ENCODE measurements at regions of chr19 and their contacts with region 1.

Region 1: DNA sequence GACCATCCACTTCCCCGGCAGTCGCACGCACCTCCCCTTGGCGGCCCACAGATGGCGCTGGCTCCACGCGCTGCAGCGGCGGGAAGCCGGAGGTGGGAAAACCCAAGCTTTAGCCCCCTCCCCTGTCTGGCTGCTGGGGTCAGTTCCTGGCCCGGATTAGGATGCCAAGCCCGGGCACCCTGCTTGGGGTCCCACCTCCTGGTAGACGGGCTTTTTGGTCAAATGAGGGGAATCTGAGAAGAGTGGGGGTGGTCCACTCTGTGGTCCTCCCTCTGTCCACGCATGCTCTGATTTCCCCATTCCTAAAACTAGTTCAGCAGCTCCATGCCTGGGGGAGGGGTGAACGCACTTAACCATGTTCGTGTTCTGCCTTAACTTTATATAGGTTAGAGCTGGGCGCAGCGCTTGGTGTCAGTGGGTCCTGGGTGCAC is 8.1 kb upstream of the ADGRE2 start:
- DNase-seq: no peak
- ATAC-seq: no peak
- H3K4me3 Mint-ChIP-seq: peak overlapping the region; percentile 41
- H3K27ac Mint-ChIP-seq: peak overlapping the region; percentile 63
- H3K4me1 Mint-ChIP-seq: peaks cover 41% of the 10 kb centered on the region
- H3K27me3 Mint-ChIP-seq: no peaks in the 10 kb centered on the region
- CTCF ChIP-seq: no peak

Region 2: GRCh38 chr19:14577885-14578427 is 208.5 kb before region 1 on chr19:
- CTCF ChIA-PET with region 1: interaction called, 5 read pairs
- POLR2A ChIA-PET with region 1: interaction called, 3 read pairs
- intact Hi-C with region 1: loop called (anchors 2 kb)
- DNase-seq: peak; percentile 52
- ATAC-seq: peak; percentile 59
- H3K4me3 Mint-ChIP-seq: peak overlapping the region; percentile 71
- H3K27ac Mint-ChIP-seq: peak overlapping the region; percentile 75
- H3K4me1 Mint-ChIP-seq: peaks cover 78% of the 10 kb centered on the region
- H3K27me3 Mint-ChIP-seq: no peaks in the 10 kb centered on the region
- CTCF ChIP-seq: no peak

Region 3: DNA sequence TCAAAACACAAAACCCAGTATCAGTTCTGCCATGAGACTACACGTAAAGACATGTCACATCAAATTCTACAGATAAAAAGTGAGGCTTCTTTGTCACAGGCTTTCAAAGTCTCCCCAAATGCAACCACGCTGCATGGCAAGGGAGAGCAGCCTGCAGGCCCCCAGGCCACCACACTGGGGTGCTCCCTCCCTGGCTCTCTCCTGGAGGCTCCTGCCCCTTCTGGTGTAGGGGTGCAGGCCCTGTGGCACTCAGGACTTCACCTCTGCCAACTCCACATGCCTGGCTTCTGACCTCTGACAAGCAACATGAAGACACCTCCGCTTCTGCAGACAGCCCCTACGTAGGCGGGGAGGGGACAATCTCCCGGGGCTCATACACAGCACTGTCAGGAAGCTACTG is 578.8 kb after region 1 on chr19:
- CTCF ChIA-PET with region 1: no interaction called
- POLR2A ChIA-PET with region 1: no interaction called
- intact Hi-C with region 1: no loop called
- DNase-seq: no peak
- ATAC-seq: no peak
- H3K4me3 Mint-ChIP-seq: no peak overlapping the region
- H3K27ac Mint-ChIP-seq: no peak overlapping the region
- H3K4me1 Mint-ChIP-seq: no peaks in the 10 kb centered on the region
- H3K27me3 Mint-ChIP-seq: no peaks in the 10 kb centered on the region
- CTCF ChIP-seq: no peak

Measured in activated B cell treated with CpG ODN at 0.5 μM for 24 hours (primary cell).